GM18951 (cell line): ENCODE measurements at regions of chr6 and their contacts with region 1.

Region 1: DNA sequence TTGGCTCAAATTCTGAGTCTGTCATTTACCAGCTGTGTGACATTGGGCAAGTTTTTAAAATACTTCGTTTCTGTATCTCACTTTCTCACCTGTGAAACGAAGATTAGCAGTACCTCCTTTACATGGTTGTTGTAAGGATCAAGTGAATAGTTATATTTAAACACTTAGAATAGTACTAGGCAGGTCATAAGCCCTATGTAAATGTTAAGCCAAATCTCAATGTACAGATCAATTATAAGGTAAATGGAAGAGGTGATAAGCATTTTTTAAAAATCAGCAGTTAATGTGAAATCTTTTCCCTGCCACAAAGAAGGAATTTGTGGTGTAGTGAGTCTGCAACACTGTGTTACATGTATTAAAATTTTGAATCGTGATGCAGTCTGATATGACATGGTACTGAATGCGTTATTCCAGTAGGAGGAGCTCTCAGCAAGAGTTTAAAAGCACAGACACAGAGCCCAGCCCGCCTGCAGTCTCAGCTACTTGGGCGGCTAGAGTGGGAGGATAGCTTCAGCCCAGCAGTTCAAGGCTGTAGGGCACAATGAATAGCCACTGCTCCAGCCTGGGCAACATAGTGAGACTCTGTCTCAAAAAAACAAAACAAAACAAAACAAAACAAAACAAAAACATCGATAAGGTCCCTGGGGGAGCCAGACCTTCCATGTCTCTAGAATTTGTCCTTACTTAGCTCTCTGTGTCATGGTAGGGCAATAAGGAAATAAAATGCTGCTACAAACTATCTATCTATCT is 46.0 kb downstream of the GTF2H5 start:
- POLR2A ChIP-seq: no peak

Region 2: GRCh38 chr6:158072083-158072721 is 141.9 kb before region 1 on chr6:
- in situ Hi-C with region 1: no loop called
- POLR2A ChIP-seq: no peak

Region 3: DNA sequence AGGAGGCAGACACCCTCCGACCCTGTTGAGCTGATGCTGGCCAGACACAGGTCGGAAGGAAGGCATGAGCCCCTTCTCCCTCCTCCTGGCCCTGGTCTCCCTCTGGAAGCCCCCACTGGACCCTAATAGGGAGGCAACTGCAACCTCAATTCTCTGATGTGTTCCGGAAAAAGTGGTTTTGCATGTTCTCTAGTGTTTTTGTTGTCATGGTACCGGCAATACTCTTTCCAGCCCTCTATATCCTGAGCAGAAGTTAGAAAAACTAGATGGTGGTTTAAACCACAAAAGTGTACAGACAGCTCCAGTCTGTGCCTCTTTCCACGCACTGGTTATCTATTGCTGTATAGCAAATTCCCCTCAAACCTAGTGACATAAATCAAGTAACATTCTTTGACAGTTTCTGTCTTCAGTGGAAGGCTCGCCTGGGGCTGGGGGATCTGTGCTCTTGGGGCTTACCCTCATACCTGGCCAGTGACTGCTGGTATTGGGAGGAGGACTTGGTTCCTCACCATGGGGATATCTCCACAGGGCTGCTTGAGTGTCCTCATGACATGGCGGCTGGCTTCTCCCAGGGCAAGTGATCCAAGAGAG is 472.8 kb after region 1 on chr6:
- in situ Hi-C with region 1: loop called (anchors 10 kb)
- POLR2A ChIP-seq: no peak

Region 4: GRCh38 chr6:158972241-158973233 is 758.4 kb after region 1 on chr6:
- in situ Hi-C with region 1: loop called (anchors 10 kb)
- POLR2A ChIP-seq: no peak

Region 5: DNA sequence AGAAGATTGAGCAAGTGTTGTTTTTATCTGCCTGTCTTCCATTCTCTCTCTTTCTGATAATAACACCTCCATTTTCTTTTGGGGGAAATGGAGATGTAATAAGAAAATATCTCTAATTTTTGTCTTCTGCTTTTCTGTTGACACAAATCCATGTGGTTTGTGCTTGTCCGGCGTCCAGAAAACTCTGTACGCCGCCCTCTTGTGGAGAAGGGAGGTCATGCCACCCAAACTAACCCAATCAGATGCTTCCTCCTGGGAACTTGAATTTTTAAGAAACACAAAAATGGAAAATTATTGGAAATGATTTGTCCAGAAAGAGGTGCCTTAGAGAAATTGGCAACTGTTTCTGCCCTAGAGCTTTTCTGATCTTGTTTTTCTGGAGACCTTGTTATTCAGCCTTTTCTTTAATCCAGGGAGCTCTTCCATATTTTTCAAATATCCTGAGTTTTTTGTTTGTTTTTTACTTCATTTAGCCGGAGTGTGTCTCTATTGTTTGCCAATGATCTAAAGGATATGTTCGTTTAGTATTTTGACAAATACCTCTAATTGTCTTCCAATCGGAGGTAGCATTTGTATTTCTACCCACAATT is 937.3 kb after region 1 on chr6:
- in situ Hi-C with region 1: no loop called
- POLR2A ChIP-seq: no peak